ENCODE measurements at regions of chr11 and their contacts with region 1.

Region 1: DNA sequence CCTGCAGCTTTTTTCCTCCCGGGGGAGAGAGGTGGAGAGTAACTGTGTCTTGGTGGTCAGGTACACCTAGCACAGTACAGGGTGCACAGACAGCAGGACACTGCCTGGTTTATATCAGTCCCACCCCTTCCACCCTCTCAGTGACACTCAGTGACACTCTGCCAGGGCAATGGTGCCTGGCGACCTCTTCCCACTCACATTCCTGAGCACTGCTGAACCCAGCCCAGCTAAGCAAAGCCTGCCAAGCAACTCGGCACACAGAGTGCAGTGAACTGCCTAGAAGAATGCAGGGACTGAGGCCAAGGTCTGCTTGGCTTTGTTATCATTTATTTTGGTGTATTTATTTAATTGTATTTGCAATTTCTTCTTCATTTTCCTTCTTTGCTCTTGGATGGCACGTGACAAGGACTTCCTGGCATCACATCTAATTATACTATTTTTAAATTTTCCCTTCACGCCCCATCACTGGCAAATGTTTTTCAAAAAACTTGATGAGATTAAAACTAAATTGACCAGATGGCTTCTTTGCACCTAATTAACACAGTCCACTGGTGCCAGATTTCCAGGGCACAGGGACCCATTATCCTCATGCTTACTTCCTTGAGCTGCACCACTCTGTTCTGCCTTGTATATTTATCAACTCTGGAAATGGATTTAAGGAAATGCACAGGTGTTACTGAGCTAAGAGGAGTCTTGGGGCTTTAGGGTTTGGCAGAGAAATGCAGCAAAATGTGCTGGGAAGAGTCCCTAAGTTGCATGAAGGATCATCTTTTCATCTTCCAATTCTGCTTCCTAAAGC is 205.6 kb downstream of the ADAMTS15 start:
- DNase-seq: peak; percentile 74 to 91
- ATAC-seq: peak; percentile 73 to 91 (median 86)
- H3K4me3 ChIP-seq: no peak overlapping the region
- H3K27ac ChIP-seq: peak overlapping the region; percentile 60
- H3K4me1 ChIP-seq: peaks cover 18% of the 10 kb centered on the region
- H3K27me3 ChIP-seq: no peaks in the 10 kb centered on the region
- CTCF ChIP-seq: no peak

Region 2: DNA sequence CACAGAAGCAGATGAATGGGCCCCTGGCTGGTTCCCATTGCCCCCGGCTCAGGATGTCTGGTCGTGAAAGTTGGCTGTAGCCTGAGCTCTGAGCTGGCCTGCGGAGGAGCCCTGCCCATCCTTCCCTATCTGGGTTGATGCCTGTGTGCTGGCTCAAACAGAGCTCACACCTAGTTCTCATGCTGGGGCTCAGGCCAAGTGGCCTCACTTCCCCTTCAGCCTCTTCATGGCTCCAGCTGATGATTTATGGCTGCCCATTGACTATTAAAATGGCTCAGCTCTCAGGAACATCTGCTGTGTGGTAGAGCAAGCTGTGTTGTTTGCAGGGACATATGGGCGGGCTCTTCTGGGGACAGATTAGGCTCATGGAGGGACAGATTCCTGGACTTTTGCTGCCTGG is 140.9 kb before region 1 on chr11:
- intact Hi-C with region 1: loop called in 1 of 2 experiments (anchors 10 kb)
- DNase-seq: peak; percentile 37 to 90
- ATAC-seq: peak; percentile 77 to 95 (median 88)
- H3K4me3 ChIP-seq: no peak overlapping the region
- H3K27ac ChIP-seq: peak overlapping the region; percentile 34
- H3K4me1 ChIP-seq: peaks cover 25% of the 10 kb centered on the region
- H3K27me3 ChIP-seq: no peaks in the 10 kb centered on the region
- CTCF ChIP-seq: no peak

Region 3: DNA sequence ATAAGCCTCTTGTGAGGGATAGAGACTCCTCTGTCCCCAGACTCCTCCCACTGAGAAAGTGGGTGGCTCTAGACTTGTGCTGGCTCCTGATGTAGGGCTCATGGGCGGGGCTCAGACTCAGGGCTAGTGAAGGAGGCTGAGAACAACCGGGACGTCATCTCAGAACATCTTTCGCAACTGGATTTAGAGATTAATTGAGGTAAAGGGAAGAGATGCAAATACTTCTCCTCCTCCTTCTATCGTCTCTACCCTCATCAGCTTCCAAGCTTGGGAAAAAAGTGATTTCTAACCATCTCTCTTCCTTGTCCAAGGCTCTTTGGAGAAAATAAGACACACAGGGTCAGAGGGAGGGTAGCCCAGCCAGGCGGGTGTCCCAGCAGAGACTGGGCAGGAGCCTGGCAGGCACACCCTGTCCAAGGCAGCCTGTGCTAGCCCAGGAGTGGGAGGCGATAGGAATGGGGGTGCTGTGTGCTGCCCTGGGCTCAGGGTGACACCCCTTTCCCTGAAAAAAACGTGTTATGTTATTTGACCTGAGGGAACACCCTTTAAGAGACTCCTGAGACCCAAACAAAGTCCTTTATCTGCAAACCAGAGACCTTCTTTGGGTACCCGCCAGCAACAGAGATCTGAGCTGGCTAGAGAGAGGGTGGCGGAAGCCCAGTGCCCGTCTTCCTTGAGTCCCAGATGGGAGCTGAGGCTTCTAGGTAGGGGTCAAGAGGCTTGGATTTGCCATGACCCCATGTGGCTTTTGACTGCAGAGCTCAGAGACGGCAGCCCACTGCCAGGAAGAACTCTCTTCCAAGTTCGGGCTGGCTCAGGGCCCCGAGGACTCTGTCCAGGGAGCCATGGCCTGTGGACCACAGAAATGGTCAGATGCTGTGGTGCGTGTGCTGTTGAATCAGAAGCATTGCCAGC is 44.7 kb before region 1 on chr11:
- intact Hi-C with region 1: loop called in 1 of 2 experiments (anchors 5 kb)
- DNase-seq: peak; percentile 85 to 92
- ATAC-seq: peak; percentile 48 to 84 (median 82)
- H3K4me3 ChIP-seq: no peak overlapping the region
- H3K27ac ChIP-seq: peak overlapping the region; percentile 48
- H3K4me1 ChIP-seq: peaks cover 10% of the 10 kb centered on the region
- H3K27me3 ChIP-seq: no peaks in the 10 kb centered on the region
- CTCF ChIP-seq: no peak

Region 4: DNA sequence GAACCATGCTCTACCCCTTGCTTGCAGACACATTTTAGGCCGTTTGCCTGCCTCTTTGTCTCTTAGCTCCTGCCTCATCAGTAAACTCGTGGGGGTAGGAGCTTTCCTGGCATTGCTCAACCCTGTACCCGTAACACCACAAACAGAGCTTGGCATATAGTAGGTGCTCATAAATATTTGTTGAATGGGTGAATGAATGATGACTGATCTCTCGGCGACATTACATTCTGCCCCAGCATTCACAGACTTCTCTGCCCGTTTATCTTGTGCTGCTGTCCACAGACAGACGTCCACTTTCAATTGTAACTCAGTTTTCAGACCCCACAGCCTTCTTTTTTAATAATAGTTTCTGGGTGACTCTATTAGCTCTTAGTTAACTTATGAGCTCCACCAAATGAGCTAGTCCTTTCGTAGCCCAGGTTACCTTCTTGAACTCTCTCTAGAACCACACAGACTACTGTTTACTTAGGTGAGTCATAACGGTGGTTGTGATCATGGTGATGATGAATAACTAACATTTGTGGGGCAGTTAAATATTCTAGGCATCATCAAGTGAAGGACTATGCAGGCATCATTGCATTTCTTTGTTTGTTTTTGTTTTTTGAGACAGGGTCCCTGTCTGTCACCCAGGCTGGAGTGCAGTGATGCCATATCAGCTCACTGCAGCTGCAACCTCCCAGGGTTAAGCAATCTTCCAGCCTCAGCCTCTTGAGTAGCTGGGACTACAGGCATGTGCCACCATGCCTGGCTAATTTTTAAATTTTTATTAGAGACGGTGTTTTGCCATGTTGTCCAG is 17.1 kb before region 1 on chr11:
- intact Hi-C with region 1: no loop called
- DNase-seq: no peak
- ATAC-seq: no peak
- H3K4me3 ChIP-seq: no peak overlapping the region
- H3K27ac ChIP-seq: no peak overlapping the region
- H3K4me1 ChIP-seq: peaks cover 7% of the 10 kb centered on the region
- H3K27me3 ChIP-seq: no peaks in the 10 kb centered on the region
- CTCF ChIP-seq: no peak

Measured in psoas muscle (tissue), 8 donors.